T-cell (primary cell): ENCODE measurements at regions of chr6 and their contacts with region 1.

Region 1: DNA sequence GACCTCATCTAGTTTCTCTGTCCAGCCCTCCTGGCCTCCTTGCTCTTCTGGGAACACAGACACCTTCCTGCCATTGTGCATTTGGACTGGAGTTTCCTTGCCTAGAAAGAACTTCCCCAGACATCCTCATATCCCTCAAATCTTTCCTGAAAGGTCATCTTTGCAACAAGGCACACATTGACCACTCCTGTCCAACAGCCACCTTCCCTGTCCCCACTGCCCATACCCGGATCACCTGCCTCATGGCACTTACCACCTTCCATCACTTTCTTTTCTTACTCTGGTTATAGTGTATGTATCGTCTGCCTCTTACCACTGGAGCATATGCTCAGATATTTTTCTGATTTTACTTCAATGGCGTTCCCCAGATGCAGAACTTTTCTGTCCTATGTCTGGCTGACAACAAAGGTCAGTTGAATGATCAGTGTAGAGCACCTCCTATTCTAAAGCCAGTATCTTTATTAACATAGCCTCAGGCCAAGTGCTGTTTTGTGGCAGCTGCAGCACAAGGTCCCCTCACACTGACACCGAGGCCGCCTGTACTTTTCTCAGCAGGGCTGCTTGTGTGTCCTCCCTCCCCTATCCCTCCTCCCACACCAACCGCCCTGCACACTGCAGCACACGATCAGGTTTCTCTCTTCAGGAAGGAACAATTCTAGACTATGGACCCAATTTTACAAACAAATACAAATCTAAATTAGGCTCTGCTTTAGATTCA is 4.1 kb downstream of the HLA-C start:
- DNase-seq: peak in 10 of 35 experiments; percentile 9 to 55 (median 26)
- ATAC-seq: no peak
- H3K4me3 ChIP-seq: no peak overlapping the region
- H3K4me3 Mint-ChIP-seq: peak overlapping the region; percentile 25 to 98 (median 97)
- H3K27ac ChIP-seq: peak overlapping the region; percentile 29
- H3K27ac Mint-ChIP-seq: peak overlapping the region; percentile 59 to 75
- H3K4me1 ChIP-seq: peaks cover 11 to 38% of the 10 kb centered on the region in 2 experiments
- H3K4me1 Mint-ChIP-seq: peaks cover 43 to 64% (median 43%) of the 10 kb centered on the region in 3 donors
- H3K27me3 ChIP-seq: no peaks in the 10 kb centered on the region
- H3K27me3 Mint-ChIP-seq: no peaks in the 10 kb centered on the region

Region 2: DNA sequence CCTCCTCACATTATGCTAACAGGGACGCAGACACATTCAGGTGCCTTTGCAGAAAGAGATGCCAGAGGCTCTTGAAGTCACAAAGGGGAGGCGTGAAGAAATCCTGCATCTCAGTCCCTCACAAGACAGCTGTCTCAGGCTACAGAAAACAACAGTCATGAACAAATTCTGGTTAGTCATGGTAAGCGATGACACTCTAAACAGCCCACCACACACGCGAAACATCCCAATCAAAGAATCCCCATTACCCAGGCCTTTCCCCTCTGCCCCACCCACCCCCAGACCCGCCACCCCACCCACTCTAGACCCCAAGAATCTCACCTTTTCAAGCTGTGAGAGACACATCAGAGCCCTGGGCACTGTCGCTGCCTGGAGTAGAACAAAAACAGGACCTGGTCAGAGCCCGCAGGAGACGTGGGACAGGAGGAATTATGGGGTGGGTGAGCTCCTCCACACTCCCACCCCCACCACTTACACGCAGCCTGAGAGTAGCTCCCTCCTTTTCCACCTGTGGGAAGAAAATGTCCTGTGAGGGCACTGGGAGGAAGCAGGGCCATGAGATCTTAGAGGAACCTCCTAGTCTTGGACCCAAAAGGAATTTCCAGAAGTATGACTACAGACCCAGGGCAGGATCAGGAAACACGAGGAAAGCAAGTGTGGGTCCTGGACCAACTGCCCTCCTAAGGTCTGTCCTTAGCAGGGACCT is 86.5 kb after region 1 on chr6:
- CTCF ChIA-PET with region 1: no interaction called
- POLR2A ChIA-PET with region 1: interaction called, 5 to 39 read pairs
- DNase-seq: peak in 7 of 35 experiments; percentile 12 to 54 (median 23)
- ATAC-seq: no peak
- H3K4me3 ChIP-seq: peak overlapping the region; percentile 83 to 99
- H3K4me3 Mint-ChIP-seq: peak overlapping the region; percentile 92 to 99 (median 96)
- H3K27ac ChIP-seq: peak overlapping the region; percentile 69
- H3K27ac Mint-ChIP-seq: peak overlapping the region; percentile 90 to 92
- H3K4me1 ChIP-seq: peaks cover 30 to 62% of the 10 kb centered on the region in 2 experiments
- H3K4me1 Mint-ChIP-seq: peaks cover 66 to 78% (median 67%) of the 10 kb centered on the region in 3 donors
- H3K27me3 ChIP-seq: no peaks in the 10 kb centered on the region
- H3K27me3 Mint-ChIP-seq: no peaks in the 10 kb centered on the region